ENCODE measurements at regions of chr11 and their contacts with region 1.

Region 1: GRCh38 chr11:124586238-124586860 is 16.6 kb downstream of the OR8A1 start:
- DNase-seq: no peak
- H3K4me3 ChIP-seq: no peak overlapping the region
- H3K27me3 ChIP-seq: no peaks in the 10 kb centered on the region
- CTCF ChIP-seq: peak; percentile 74

Region 2: DNA sequence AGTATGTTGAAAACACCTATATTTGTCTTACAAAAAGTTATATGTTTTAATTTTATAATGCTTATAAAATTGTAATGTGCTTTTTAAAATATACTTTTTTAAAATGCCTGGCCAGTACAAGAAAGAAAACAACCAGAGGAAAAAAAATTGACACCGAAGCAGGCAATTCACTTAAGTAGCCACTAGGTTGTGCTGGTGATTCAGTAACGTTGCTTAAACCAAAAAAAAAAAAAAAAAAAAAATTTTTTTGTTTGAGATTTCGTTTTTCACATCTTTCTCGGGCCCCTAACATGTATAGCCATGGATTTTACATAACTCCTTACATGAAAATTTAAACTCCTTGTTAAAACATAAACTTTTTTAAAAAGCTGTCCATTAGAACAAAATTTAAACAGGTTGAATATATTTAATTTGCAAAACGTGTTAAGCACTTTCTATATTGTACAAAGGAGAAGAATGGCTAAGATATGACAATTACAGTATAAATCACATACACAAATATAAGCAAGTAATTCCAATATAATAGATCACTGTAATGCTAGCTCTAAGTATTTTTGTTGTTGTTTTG is 170.9 kb before region 1 on chr11:
- CTCF ChIA-PET with region 1: interaction called, 15 read pairs
- POLR2A ChIA-PET with region 1: no interaction called
- DNase-seq: no peak
- H3K4me3 ChIP-seq: no peak overlapping the region
- H3K27me3 ChIP-seq: no peaks in the 10 kb centered on the region
- CTCF ChIP-seq: peak; percentile 76

Region 3: GRCh38 chr11:124656774-124657630 is 70.7 kb after region 1 on chr11:
- CTCF ChIA-PET with region 1: no interaction called
- POLR2A ChIA-PET with region 1: no interaction called
- DNase-seq: no peak
- H3K4me3 ChIP-seq: no peak overlapping the region
- H3K27me3 ChIP-seq: no peaks in the 10 kb centered on the region; the same call in 1 of the 2 replicates
- CTCF ChIP-seq: no peak

Region 4: GRCh38 chr11:124891373-124891861 is 305.1 kb after region 1 on chr11:
- CTCF ChIA-PET with region 1: no interaction called
- POLR2A ChIA-PET with region 1: no interaction called
- DNase-seq: no peak
- H3K4me3 ChIP-seq: no peak overlapping the region
- H3K27me3 ChIP-seq: no peaks in the 10 kb centered on the region
- CTCF ChIP-seq: peak; percentile 21; the same call in 1 of the 2 replicates